ENCODE measurements at regions of chr20 and their contacts with region 1.

Region 1: DNA sequence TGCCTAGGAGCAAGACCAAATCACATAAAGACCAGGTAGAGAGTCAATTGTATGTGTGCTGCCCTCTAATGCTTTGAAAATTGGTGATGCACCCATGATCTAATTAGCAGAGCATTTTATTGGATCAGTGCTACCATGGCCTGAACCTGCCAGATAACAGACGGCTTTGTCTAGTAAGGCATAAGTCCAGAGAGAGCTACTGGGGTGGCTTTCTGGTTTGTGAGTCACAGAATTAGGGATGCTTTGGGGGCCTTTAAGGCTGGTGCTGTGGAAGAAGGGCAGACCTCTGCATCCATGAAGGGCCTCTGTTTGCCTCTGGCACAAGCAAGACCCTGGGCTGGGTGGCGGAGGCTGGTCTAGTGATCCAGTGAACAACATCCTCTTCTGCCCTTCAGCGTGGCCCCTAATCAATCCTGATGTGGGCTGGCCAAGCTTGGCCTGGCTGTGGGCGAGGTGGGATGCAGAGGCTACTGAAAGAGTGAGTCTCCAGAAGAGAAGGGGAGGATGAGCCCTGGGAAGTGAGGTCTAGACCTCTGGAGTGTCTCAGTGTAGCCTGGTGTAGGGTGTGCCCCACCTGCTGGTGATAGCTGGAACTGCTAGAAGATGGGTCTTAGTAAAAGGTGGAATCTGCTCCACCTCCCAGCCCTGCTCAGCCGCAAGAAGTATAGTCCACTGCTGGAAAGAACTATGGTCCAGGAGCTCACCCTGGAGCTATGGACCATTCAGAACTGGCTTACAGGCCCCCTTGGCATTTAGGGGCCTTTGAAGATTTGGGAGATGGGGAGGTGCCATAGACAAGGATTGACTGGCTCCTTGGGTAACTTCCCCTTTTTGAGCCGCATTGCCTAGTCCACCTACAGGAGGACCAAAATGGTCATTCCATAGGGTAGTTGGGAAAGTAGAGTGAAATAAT is 36.7 kb upstream of the AAR2 start:
- DNase-seq: peak; percentile 80
- CTCF ChIP-seq: peak; percentile 87

Region 2: DNA sequence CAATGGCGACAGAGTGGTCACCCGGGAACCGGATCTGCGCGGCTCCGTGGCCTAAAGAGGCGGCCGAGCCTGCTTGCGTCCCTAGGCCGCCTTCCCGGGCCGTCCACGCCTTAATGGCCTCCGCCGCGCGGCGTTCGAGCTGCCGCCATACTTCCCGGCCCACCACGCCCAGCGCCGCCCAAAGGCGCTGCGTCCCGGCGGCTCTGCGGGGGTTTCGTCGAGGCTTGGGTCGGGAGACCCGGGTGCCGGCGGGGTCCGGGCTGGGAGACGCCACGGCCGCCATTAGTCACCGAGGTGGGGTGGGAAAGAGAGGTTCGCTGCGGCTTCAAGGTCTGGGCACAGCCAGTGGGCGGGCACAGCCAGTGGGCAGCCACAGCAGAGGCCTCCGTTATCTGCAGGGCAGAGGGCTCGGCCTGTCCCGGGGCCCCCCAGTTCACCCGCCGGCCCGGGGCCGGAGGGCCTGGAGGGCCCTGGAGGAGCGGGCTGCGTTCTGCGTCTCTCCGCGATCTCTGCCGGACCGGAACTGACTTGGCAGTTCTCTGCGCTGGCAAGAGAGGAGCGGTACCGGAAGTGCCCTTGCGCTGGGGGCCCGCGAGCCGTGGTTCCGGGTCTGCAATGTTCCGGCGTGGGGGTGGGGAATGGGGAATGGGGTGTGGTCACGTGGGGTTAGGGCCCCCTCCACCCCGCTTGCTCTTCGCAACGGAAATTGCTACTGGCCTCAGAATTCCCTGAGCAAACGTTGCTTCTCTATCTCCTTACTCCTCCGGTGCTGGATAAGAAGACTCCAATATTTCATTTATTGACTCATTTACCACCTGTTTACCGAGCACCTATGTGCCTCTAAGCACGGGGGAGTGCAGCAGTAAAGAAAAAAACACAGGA is 148.9 kb before region 1 on chr20:
- CTCF ChIA-PET with region 1: no interaction called
- POLR2A ChIA-PET with region 1: no interaction called
- DNase-seq: peak; percentile 90
- CTCF ChIP-seq: no peak

Region 3: DNA sequence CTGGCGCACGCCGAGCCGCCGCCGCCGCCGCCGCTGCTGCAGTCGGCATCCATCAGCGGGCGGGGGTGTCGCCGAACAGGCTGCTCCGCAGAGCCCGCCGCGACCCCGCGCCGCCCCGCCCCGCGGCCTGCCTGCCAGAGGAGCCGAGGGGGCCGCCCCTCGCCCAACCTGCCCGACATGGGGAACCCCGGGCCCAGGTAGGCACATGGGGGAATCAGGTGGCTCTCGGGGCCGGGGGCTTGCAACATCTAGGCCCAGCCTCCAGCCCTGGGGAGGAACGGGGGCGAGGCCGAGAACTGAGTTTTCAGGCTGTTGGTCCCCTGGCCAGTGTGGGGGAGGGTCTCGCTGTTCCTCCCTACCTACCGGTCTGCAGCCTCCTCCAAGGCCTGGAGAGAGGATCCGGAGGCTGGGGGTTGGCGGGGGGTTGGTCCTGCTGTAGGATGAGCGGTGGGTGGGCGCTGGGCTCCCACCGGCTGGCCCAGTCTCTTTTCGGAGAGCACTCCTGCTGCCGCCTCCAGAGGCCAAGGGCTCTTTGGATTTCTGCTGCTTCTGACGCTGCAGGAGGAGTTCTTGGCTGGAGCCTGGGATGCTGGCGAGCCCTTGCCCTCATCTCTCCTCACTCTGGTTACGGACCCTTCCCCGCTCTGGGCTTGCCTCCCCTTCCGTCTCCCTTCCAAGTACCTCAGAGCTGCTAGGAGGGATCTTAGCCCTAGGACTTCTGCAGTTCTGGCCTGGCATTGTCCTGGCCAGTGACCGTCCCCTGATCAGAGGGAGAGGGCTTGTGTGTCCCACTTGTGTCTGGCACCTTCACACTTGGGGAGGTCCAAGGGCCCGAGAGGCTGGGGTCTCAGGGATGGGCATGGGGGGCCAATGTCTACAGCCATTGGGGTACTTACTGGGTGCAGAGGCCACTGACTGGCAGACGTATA is 44.6 kb before region 1 on chr20 and contains the start of gene EPB41L1:
- CTCF ChIA-PET with region 1: interaction called, 69 read pairs
- POLR2A ChIA-PET with region 1: no interaction called
- DNase-seq: no peak
- CTCF ChIP-seq: no peak

Region 4: GRCh38 chr20:36183155-36183944 is 16.3 kb before region 1 on chr20:
- CTCF ChIA-PET with region 1: interaction called, 17 read pairs
- POLR2A ChIA-PET with region 1: no interaction called
- DNase-seq: no peak
- CTCF ChIP-seq: no peak

Region 5: DNA sequence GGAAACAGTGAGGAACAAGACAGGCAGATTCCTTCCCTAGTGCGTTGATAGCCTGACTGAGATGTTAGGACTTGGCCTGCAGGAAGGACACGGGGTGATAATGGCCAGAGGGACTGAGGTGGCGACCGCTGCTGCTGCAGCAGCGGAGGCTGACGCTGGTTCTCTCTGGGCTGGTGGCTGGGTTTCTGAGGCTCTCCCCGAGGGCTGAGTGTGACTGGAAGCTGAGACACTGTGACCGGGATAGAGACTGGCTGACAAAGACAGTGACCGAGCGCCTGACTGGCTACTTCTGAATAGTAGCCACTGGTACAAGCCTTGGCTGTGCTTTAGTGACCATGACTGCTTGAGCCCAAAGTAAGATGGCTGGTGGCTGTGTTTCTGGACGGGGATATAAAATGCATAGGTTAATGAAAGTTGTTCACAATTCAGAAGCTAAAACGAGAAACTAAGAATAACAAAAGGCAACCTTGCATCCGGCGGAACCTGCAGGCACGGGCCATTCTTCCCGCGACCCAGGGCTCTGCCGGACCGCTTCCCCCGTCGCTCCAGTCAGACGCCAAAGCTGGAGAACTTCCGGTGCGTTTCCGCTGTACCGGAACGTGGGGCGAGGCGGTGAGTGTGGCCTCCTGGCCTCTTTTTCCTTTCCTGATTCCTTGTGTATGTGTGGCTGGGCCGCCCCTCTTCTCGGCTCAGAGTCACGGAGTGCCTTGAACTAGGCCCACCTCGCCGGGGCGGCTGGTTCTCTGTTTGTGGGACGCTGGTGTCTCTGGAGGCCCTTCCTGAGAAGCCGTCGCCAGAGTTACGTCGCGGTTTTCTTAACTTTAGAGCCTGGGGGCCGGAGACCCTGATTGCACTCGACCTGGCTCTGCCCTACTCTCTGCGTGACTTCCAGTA is 36.5 kb after region 1 on chr20 and contains the start of gene AAR2:
- CTCF ChIA-PET with region 1: interaction called, 17 read pairs
- POLR2A ChIA-PET with region 1: no interaction called
- DNase-seq: peak; percentile 81
- CTCF ChIP-seq: no peak

Region 6: GRCh38 chr20:36277546-36277945 is 77.9 kb after region 1 on chr20:
- CTCF ChIA-PET with region 1: no interaction called
- POLR2A ChIA-PET with region 1: no interaction called
- DNase-seq: no peak
- CTCF ChIP-seq: no peak

Region 7: DNA sequence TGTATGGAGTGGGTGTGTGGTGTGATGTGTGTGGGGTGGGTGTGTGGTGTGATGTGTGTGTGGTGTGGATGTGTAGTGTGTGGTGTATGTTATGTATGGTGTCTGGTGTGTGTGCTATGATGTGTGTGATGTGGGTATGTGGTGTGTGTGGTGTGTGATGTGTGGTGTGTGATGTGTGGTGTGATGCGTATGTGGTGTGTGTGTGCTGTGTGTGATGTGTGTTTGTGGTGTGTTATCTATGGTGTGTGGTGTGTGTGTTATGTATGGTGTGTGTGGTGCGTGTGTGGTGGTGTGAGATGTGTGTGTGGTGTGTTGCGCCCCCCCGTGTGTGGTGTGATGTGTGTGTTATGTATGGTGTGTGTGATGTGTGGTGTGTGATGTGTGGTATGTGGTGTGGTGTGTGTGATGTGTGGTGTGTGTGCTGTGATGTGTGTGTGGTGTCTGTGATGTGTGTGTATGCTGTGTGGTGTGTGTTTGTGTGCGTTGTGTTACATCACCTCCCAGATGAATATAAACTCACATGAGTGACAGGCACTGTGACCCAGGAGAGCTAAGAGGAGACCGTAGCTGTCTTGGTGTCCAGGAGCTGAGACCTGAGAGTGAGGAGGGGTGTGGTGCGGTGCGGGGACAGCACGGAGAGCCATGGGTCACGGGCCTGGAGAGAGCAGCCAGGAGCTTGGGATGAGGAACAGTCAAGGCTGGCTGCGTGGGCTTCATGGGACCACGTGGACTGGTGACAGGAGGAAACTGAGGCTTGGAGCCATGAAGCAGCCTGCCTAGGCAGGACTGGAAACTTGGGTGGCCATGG is 115.3 kb after region 1 on chr20:
- CTCF ChIA-PET with region 1: no interaction called
- POLR2A ChIA-PET with region 1: no interaction called
- DNase-seq: no peak
- CTCF ChIP-seq: no peak

Region 8: DNA sequence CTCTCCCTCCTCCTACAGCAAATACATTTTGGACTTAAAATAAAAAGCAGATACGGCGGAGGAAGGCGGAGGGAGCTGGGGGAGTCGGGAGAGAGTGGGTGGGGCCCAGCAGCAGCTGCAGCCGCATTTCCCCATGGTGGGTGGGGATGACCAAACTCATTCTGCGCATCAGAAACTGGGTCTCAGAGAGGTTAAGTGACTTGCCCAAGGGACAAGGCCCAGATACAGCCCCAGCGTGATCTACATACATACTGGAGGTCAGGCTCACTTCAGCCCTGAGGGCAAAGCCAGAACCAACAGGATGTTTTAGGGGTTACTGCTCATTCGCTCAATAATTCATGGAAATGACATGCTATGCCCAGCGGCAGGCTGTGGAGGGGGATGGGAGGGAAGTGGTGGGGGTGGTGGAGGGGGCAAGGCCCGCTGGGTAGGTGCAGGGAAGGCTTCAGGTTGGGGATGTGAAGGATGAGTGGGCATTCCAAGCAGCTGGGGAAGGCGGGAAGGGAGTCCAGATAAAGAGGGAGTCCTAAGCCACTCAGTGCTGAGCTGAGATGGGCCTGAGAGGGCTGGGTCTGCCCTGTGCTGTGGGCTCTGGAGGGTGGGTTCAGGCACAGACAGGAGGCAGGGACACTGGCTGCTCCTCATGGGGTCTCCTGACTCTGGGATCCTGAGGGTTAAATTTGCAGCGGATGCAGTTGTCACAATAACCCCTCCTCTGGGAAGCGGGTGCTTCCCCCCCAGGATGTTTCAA is 137.5 kb after region 1 on chr20:
- CTCF ChIA-PET with region 1: no interaction called
- POLR2A ChIA-PET with region 1: no interaction called
- DNase-seq: no peak
- CTCF ChIP-seq: no peak

Region 9: GRCh38 chr20:36439040-36439730 is 239.6 kb after region 1 on chr20:
- CTCF ChIA-PET with region 1: interaction called, 61 read pairs
- POLR2A ChIA-PET with region 1: no interaction called
- DNase-seq: peak; percentile 82
- CTCF ChIP-seq: peak; percentile 99